ENCODE measurements at regions of chr12 and their contacts with region 1.

Region 1: GRCh38 chr12:96219698-96220206 is 25.6 kb downstream of the ELK3 start:
- DNase-seq: peak in 1 of 9 experiments; percentile 45
- ATAC-seq: no peak
- H3K4me3 ChIP-seq: no peak overlapping the region
- H3K4me3 Mint-ChIP-seq: no peak overlapping the region
- H3K27ac ChIP-seq: no peak overlapping the region
- H3K27ac Mint-ChIP-seq: no peak overlapping the region
- H3K4me1 ChIP-seq: peaks cover 10% of the 10 kb centered on the region
- H3K4me1 Mint-ChIP-seq: peaks cover 21% of the 10 kb centered on the region
- H3K27me3 ChIP-seq: no peaks in the 10 kb centered on the region
- H3K27me3 Mint-ChIP-seq: no peaks in the 10 kb centered on the region
- CTCF ChIP-seq: no peak

Region 2: DNA sequence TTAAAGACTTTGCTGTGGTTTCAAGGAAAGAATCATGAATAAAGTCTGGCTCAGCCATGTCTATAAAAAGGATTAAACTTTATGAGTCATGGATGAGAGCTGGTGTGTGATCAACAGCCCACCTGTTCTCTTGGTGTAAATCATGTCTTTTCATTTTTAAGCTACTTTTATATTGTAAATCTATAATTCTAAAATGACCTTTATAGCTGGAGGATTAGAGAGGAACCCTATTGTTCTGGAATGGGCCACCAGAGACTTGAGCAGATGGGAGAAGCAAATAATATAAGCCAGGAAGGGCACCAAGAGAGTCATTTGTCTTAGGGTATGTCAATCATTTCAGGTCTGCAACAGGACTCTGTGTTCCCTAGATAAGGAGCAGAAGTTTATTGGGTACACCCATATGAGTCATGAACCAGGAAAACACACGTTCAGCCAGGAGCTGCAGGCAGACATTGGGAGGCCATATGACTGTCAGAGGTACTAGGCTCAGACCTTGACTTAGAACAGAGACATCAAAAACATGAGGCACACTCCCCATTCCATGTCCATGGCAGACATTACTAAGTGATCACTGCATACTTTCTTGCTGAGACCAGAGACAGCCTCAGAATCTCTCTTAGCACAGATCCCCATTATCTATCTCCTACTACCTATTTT is 1265.6 kb before region 1 on chr12:
- CTCF ChIA-PET with region 1: no interaction called
- POLR2A ChIA-PET with region 1: no interaction called
- intact Hi-C with region 1: no loop called
- DNase-seq: no peak
- ATAC-seq: no peak
- H3K4me3 ChIP-seq: no peak overlapping the region
- H3K4me3 Mint-ChIP-seq: no peak overlapping the region
- H3K27ac ChIP-seq: no peak overlapping the region
- H3K27ac Mint-ChIP-seq: no peak overlapping the region
- H3K4me1 ChIP-seq: no peaks in the 10 kb centered on the region
- H3K4me1 Mint-ChIP-seq: peaks cover 5% of the 10 kb centered on the region
- H3K27me3 ChIP-seq: no peaks in the 10 kb centered on the region
- H3K27me3 Mint-ChIP-seq: peaks cover 46% of the 10 kb centered on the region
- CTCF ChIP-seq: no peak

Region 3: GRCh38 chr12:96061864-96062453 is 157.8 kb before region 1 on chr12:
- CTCF ChIA-PET with region 1: interaction called, 221 read pairs
- POLR2A ChIA-PET with region 1: interaction called, 8 read pairs
- intact Hi-C with region 1: loop called (anchors 1 kb)
- DNase-seq: peak; percentile 61 to 89 (median 77)
- ATAC-seq: peak; percentile 94
- H3K4me3 ChIP-seq: no peak overlapping the region
- H3K4me3 Mint-ChIP-seq: no peak overlapping the region
- H3K27ac ChIP-seq: no peak overlapping the region
- H3K27ac Mint-ChIP-seq: peak overlapping the region; percentile 2
- H3K4me1 ChIP-seq: peaks cover 7% of the 10 kb centered on the region
- H3K4me1 Mint-ChIP-seq: peaks cover 14% of the 10 kb centered on the region
- H3K27me3 ChIP-seq: no peaks in the 10 kb centered on the region
- H3K27me3 Mint-ChIP-seq: no peaks in the 10 kb centered on the region
- CTCF ChIP-seq: peak; percentile 79

Region 4: GRCh38 chr12:96157427-96157826 is 62.3 kb before region 1 on chr12:
- CTCF ChIA-PET with region 1: interaction called, 11 read pairs
- POLR2A ChIA-PET with region 1: no interaction called
- intact Hi-C with region 1: no loop called
- DNase-seq: no peak
- ATAC-seq: no peak
- H3K4me3 ChIP-seq: no peak overlapping the region
- H3K4me3 Mint-ChIP-seq: no peak overlapping the region
- H3K27ac ChIP-seq: no peak overlapping the region
- H3K27ac Mint-ChIP-seq: no peak overlapping the region
- H3K4me1 ChIP-seq: no peaks in the 10 kb centered on the region
- H3K4me1 Mint-ChIP-seq: no peaks in the 10 kb centered on the region
- H3K27me3 ChIP-seq: no peaks in the 10 kb centered on the region
- H3K27me3 Mint-ChIP-seq: no peaks in the 10 kb centered on the region
- CTCF ChIP-seq: no peak

Region 5: GRCh38 chr12:96201272-96202227 is 18.2 kb before region 1 on chr12:
- CTCF ChIA-PET with region 1: interaction called, 21 read pairs
- POLR2A ChIA-PET with region 1: interaction called, 4 read pairs
- intact Hi-C with region 1: no loop called
- DNase-seq: peak in 1 of 9 experiments; percentile 32
- ATAC-seq: no peak
- H3K4me3 ChIP-seq: no peak overlapping the region
- H3K4me3 Mint-ChIP-seq: no peak overlapping the region
- H3K27ac ChIP-seq: no peak overlapping the region
- H3K27ac Mint-ChIP-seq: peak overlapping the region; percentile 4
- H3K4me1 ChIP-seq: peaks cover 49% of the 10 kb centered on the region
- H3K4me1 Mint-ChIP-seq: peaks cover 64% of the 10 kb centered on the region
- H3K27me3 ChIP-seq: no peaks in the 10 kb centered on the region
- H3K27me3 Mint-ChIP-seq: no peaks in the 10 kb centered on the region
- CTCF ChIP-seq: no peak

Region 6: DNA sequence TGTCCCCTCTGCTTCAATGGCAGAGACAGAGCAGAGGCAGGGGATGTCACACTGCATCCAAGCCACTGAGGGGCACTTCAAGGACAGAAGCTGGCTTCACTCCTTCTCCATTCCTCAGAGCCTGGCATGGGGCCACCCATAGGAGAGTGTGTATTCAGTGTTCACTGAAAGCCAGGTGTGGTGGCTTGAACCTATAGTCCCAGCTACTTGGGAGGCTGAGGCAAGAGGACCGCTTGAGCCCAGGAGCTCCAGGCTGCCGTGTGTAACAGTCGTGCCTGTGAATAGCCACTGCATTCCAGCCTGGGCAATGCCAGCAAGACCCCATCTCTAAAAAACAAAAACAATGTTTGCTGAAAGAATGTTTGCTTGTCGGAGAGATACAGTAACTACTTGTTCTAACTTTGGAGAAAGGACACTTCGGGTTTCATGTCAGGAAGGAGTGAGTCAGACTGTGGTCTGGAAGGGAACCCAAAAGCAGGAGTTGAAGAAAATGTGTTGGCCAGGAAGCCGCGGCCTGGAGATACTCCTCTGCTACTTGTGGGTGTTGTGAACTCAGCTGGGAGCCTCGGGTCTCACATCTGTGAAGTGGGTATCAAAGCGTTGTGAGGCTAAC is 17.8 kb after region 1 on chr12:
- CTCF ChIA-PET with region 1: interaction called, 12 read pairs
- POLR2A ChIA-PET with region 1: no interaction called
- intact Hi-C with region 1: no loop called
- DNase-seq: peak in 8 of 9 experiments; percentile 32 to 86 (median 62)
- ATAC-seq: peak; percentile 13
- H3K4me3 ChIP-seq: no peak overlapping the region
- H3K4me3 Mint-ChIP-seq: peak overlapping the region; percentile 10
- H3K27ac ChIP-seq: peak overlapping the region in 1 of 2 experiments; percentile 69
- H3K27ac Mint-ChIP-seq: peak overlapping the region; percentile 64
- H3K4me1 ChIP-seq: peaks cover 48% of the 10 kb centered on the region
- H3K4me1 Mint-ChIP-seq: peaks cover 66% of the 10 kb centered on the region
- H3K27me3 ChIP-seq: no peaks in the 10 kb centered on the region
- H3K27me3 Mint-ChIP-seq: no peaks in the 10 kb centered on the region
- CTCF ChIP-seq: no peak

Region 7: DNA sequence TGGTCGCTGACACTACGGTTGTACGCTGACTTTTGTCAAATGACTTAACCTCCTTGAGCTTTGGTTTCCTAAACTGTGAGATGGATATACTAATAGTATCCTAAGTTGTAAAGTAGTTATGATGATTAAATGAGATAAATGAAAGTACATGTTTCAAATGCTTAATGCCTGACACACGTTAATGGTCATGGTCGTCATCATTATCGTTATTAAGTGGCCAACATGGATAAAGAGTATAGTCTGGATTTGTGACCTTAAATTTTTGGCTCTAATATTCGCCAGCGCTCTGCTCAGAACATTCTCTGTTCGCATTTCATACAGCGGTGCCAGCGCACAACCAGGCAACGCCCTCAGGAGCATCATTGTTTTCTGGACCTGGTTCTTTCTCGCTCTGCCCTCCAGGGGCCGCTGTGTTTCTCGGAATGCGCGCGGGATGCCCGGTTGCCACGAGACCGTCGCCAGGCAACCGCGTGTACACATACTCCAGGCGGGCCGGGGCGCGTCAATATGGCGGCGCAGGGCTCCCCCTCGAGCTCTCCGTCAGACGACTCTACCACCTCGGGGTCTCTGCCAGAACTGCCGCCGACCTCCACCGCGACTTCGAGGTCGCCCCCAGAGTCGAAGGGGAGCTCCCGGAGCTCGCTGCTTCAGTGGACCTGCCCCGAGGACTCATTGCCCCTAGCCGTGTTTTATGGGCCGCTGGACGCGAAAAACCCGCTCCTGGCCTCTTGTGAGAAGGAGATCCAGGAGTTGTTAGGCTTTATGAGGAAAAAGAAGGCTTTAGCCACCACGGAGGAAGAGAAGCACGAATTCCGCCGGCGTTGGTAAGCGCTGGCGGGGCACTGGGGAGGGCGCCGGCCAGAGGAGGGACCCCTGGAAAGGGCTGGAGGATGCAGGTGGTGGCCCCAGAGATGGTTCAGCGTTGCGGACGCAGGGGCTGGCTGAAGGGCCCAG is 269.6 kb after region 1 on chr12 and contains the start of gene CFAP54:
- CTCF ChIA-PET with region 1: interaction called, 11 read pairs
- POLR2A ChIA-PET with region 1: interaction called, 4 read pairs
- intact Hi-C with region 1: no loop called
- DNase-seq: peak; percentile 91 to 98 (median 95)
- ATAC-seq: peak; percentile 88
- H3K4me3 ChIP-seq: peak within 1 kb of the TSS; percentile 72 to 75
- H3K4me3 Mint-ChIP-seq: peak within 1 kb of the TSS; percentile 91
- H3K27ac ChIP-seq: peak within 1 kb of the TSS; percentile 58 to 76
- H3K27ac Mint-ChIP-seq: peak within 1 kb of the TSS; percentile 82
- H3K4me1 ChIP-seq: peaks cover 23% of the 10 kb centered on the region
- H3K4me1 Mint-ChIP-seq: peaks cover 24% of the 10 kb centered on the region
- H3K27me3 ChIP-seq: no peaks in the 10 kb centered on the region
- H3K27me3 Mint-ChIP-seq: no peaks in the 10 kb centered on the region
- CTCF ChIP-seq: peak; percentile 85
- total RNA-seq, gene CFAP54: 1.0 to 1.2 TPM

Measured in CD8-positive, alpha-beta T cell (primary cell).